ENCODE measurements at regions of chr17 and their contacts with region 1.

Region 1: DNA sequence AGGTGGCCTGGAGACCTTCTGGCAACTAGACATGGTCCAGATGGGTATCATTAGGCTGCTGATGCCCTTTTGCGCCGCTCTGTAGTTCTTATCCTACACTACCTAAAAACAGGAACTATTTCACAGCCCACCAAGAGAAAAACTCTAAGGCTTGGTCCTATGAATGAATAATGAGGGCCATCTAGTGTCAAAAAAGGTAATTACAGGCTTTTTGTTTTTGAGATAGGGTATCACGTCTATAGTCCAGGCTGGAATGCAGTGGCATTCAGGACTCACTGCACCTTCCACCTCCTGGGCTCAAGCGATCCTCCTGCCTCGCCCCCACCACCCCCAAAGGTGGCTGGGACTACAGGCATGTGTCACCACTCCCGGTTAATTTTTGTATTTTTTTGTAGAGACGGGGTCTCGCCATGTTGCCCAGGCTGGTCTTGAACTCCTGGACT is 20.9 kb downstream of the COIL start:
- DNase-seq: no peak
- ATAC-seq: peak; percentile 60

Region 2: DNA sequence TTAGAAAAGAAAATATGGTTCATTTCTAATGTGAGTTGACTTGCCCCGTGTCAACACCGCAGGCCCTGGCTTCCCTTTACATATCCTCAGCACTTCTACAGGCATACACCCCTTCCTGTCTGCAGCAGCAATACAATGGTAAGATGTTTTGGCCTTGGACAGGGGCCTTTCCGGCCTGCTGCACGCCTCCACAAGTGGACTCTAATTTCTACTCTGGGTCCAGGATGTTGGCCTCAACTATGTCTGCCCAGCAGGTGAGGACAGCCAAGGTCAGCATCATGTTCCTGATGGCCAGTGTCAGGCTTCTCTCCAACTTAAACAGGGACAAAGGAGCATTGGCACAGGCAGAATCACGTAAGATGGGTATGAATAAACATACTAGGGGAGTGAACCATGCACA is 117.2 kb before region 1 on chr17:
- intact Hi-C with region 1: loop called (anchors 2 kb)
- DNase-seq: no peak
- ATAC-seq: peak; percentile 72

Measured in left ventricle myocardium superior (tissue), 1 donor.